K562 (cell line): ENCODE measurements at regions of chr7 and their contacts with region 1.

Region 1: DNA sequence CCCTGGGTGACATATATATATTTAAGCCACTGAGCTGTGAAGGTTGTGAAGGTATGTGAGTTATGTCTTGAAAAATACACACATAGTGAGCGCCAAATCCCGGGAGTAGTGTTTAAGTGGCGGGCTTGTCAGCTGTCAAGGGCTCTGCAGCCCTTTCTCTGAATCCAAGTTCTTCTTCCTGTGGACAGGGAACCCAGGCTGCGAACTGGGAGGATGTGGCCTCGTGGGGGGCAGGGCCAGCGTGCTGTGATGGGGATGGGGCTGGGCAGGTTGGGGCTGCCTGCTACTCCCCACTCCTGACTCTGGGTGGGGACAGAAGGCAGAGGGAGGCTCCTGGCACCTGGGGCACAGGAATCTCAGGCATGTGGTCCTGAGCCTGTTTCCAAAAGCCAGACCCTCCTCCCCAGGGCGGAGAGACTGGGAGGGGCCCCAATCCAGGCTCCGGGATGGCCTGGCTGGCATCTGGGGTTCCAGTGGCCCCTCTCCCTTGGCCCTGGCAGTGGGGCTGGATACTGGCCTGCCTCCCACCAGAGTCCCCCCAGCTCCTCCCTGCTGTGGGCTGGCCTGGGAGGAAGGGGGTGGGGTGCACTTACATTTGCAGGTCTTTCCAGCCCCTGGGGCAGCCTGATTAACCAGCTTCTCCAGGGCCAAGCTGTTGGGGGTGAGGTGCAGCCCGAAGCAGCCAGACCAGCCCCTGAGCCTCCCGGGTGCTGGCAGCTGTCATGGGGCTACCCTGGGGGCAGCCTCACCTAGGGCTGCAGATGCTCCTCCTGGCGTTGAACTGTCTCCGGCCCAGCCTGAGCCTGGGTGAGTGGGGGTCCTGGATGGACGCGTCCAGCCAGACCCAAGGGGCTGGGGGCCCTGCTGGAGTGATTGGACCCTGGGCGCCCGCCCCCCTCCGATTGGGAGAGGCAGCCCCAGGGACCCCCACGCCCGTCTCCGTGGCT is at the start of gene UPK3B:
- DNase-seq: peak in 1 of 4 experiments; percentile 27
- ATAC-seq: peak; percentile 7
- H3K4me3 ChIP-seq: no peak within 1 kb of the TSS
- H3K27ac ChIP-seq: no peak within 1 kb of the TSS
- H3K4me1 ChIP-seq: peaks cover 0 to 34% of the 10 kb centered on the region in 2 experiments; a peak in 2 of 5 replicates
- H3K27me3 ChIP-seq: no peaks in the 10 kb centered on the region
- CTCF ChIP-seq: no peak
- EP300 ChIP-seq: no peak
- POLR2A ChIP-seq: no peak
- RAD21 ChIP-seq: no peak
- polyA plus RNA-seq, gene UPK3B: not detected

Region 2: GRCh38 chr7:76326646-76327233 is 183.5 kb before region 1 on chr7:
- CTCF ChIA-PET with region 1: no interaction called
- POLR2A ChIA-PET with region 1: no interaction called
- in situ Hi-C with region 1: no loop called
- intact Hi-C with region 1: no loop called
- DNase-seq: no peak
- ATAC-seq: no peak
- H3K4me3 ChIP-seq: no peak overlapping the region
- H3K27ac ChIP-seq: no peak overlapping the region
- H3K4me1 ChIP-seq: peaks cover 10 to 18% of the 10 kb centered on the region in 2 experiments
- H3K27me3 ChIP-seq: no peaks in the 10 kb centered on the region
- CTCF ChIP-seq: no peak
- EP300 ChIP-seq: no peak
- POLR2A ChIP-seq: no peak
- RAD21 ChIP-seq: no peak

Region 3: DNA sequence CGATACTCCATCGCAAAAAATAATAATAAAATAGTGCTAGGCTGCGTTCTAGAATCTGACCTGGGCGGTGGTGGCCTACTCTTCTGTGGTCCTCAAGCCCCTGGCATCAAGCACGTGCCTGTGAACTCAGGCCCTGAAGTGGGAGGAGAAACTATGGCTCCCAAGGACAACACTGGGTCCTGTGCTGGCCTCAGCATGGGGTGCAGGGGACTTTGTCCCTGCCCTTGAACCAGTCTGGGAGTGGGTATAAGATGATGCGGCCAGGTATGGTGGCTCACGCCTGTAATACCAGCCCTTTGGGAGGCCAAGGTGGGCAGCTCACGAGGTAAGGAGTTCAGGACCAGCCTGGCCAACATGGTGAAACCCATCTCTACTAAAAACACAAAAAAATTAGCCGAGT is 80.0 kb before region 1 on chr7:
- CTCF ChIA-PET with region 1: no interaction called
- POLR2A ChIA-PET with region 1: no interaction called
- in situ Hi-C with region 1: loop called (anchors 10 kb)
- intact Hi-C with region 1: no loop called
- DNase-seq: peak in 1 of 4 experiments; percentile 2
- ATAC-seq: no peak
- H3K4me3 ChIP-seq: no peak overlapping the region
- H3K27ac ChIP-seq: no peak overlapping the region
- H3K4me1 ChIP-seq: peaks cover 4 to 10% of the 10 kb centered on the region in 2 experiments; a peak in 4 of 5 replicates
- H3K27me3 ChIP-seq: peaks cover 0 to under 1% of the 10 kb centered on the region in 2 experiments; a peak in 2 of 5 replicates
- CTCF ChIP-seq: no peak
- EP300 ChIP-seq: no peak
- POLR2A ChIP-seq: no peak
- RAD21 ChIP-seq: no peak

Region 4: GRCh38 chr7:76997381-76997780 is 487.2 kb after region 1 on chr7:
- CTCF ChIA-PET with region 1: no interaction called
- POLR2A ChIA-PET with region 1: no interaction called
- in situ Hi-C with region 1: no loop called
- intact Hi-C with region 1: loop called (anchors 10 kb)
- DNase-seq: peak in 3 of 4 experiments; percentile 14 to 28 (median 22)
- ATAC-seq: no peak
- H3K4me3 ChIP-seq: no peak overlapping the region
- H3K27ac ChIP-seq: no peak overlapping the region
- H3K4me1 ChIP-seq: peaks cover 0 to 11% of the 10 kb centered on the region in 2 experiments; a peak in 2 of 5 replicates
- H3K27me3 ChIP-seq: no peaks in the 10 kb centered on the region
- CTCF ChIP-seq: no peak
- EP300 ChIP-seq: no peak
- POLR2A ChIP-seq: no peak
- RAD21 ChIP-seq: no peak